ACHN (cell line): ENCODE measurements at regions of chr1 and their contacts with region 1.

Region 1: DNA sequence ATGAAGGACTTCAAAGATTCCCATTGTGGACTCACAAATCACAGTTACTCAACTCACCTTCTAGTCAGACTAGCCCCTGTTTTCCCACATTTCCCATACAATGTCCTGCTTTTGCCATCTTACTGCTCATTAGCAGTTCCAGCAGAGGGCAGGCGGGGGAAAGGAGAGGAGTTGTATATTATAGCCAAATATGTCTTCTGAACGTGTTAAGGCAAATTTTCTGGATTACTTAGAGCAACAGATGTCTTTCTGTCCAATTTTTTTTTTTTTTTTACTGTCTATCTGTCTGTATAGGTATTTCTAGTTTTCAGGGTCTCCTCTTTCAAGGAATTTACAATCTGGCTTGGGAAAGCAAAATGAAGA is 29.9 kb upstream of the DDAH1 start:
- DNase-seq: peak; percentile 12

Region 2: DNA sequence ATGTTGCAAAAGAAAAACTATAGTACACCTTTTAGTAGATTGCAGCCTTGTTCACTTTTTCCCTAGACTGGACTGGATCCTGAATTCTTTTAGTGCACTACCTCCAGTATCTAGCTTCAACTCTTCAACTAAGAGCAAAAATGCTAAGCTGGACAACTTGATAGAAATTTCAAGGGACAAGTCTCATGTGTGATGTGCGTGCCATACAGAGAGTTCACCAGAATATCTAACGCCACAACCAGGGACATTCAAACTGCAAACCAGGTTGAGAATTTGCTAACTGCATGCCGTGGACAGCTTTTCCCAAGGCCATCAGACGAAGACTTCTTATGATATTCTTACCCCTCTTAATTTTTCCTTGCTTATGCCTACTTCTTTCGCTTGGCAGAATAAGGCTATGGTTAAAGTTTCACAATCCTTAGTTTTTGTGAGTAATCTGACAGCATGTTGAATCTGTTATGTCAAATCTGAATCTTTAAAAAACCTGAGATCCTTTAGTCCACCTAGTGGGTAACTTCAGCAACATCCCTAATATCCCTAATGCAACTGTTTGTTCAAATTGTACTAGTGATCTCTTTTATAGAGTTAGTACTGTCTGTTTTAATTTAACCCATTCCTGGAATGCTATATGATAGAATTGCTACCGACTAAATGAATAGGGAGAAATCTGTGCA is 96.4 kb before region 1 on chr1:
- in situ Hi-C with region 1: loop called (anchors 25 kb)
- DNase-seq: peak; percentile 47